ENCODE measurements at regions of chr22 and their contacts with region 1.

Region 1: DNA sequence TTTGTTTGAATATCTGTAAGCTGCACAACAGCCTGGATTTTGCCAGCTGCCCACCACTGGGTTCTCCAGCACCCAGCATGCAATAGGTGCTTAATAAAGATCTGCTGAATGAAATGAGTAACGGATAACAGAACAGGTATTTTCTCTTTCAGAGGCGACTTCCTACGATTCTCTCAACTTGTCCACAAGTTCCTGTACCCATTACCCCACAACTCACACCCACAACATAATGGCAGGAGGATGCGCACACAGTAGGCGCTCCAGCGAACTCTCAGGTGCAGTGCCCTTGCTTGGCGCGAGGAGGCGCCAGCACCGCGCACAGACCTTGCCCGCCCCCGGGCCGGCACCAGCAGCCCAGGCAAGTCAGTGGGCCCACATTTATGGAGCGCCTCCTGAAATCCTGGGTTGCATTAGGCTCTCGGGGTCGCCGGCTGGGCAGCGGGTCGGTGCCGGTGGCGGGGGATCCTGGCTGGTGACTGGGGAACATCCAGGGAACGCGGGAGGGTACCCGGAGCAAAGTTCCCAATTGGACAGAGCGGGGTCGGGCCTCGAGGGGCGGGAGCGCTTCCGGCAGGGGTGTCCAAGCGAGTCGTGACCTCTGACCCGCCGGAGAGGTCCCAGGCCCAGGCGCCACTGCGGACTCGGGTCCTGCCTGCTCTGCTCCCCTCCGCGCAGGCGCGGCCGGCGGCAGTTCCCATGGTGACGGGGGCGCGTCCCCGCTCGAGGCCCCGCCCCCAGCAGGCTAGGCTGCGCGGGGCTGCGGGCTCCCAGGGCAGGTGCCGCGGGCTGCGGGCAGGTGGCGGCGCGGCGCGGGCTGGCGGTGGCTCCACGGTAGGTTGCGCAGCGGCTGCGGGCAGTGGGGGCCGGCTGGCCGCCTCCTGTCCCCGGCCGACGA is at the start of gene KIAA1671:
- DNase-seq: no peak
- H3K4me3 ChIP-seq: peak within 1 kb of the TSS; percentile 57
- CTCF ChIP-seq: peak; percentile 98

Region 2: DNA sequence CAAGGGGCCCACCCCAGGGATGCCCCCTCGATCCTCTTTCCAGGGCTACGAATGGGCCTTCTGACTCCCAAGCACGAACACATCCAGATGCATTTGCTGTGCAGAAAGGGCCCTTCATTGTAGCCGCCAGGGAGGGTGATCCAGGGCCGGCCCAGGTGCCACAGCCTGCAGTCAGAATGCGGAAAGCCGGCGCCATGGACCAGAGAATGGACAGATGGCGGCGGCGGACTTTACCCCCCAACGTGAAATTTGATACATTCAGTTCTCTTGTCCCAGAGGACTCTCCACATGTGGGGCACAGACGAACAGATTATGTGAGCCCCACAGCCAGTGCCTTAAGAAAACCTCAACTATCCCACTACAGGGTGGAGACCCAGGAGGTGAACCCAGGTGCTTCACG is 87.6 kb after region 1 on chr22:
- in situ Hi-C with region 1: loop called (anchors 5 kb)
- DNase-seq: no peak
- H3K4me3 ChIP-seq: no peak overlapping the region
- CTCF ChIP-seq: no peak